CD8-positive, alpha-beta T cell (primary cell): ENCODE measurements at regions of chr14 and their contacts with region 1.

Region 1: GRCh38 chr14:31207755-31208545 is at the start of gene HECTD1:
- DNase-seq: peak; percentile 78 to 97 (median 86)
- ATAC-seq: peak; percentile 67
- H3K4me3 ChIP-seq: peak within 1 kb of the TSS; percentile 74 to 77
- H3K4me3 Mint-ChIP-seq: peak within 1 kb of the TSS; percentile 96
- H3K27ac ChIP-seq: peak within 1 kb of the TSS; percentile 94 to 95
- H3K27ac Mint-ChIP-seq: peak within 1 kb of the TSS; percentile 100
- H3K4me1 ChIP-seq: peaks cover 36% of the 10 kb centered on the region
- H3K4me1 Mint-ChIP-seq: peaks cover 57% of the 10 kb centered on the region
- H3K27me3 ChIP-seq: no peaks in the 10 kb centered on the region
- H3K27me3 Mint-ChIP-seq: no peaks in the 10 kb centered on the region
- CTCF ChIP-seq: peak; percentile 81
- total RNA-seq, gene HECTD1: 148 to 152 TPM

Region 2: GRCh38 chr14:30848449-30849240 is 359.3 kb before region 1 on chr14:
- CTCF ChIA-PET with region 1: no interaction called
- POLR2A ChIA-PET with region 1: no interaction called
- intact Hi-C with region 1: no loop called
- DNase-seq: no peak
- ATAC-seq: no peak
- H3K4me3 ChIP-seq: no peak overlapping the region
- H3K4me3 Mint-ChIP-seq: no peak overlapping the region
- H3K27ac ChIP-seq: no peak overlapping the region
- H3K27ac Mint-ChIP-seq: no peak overlapping the region
- H3K4me1 ChIP-seq: no peaks in the 10 kb centered on the region
- H3K4me1 Mint-ChIP-seq: no peaks in the 10 kb centered on the region
- H3K27me3 ChIP-seq: no peaks in the 10 kb centered on the region
- H3K27me3 Mint-ChIP-seq: peaks cover 30% of the 10 kb centered on the region
- CTCF ChIP-seq: no peak

Region 3: GRCh38 chr14:31127690-31128089 is 80.3 kb before region 1 on chr14:
- CTCF ChIA-PET with region 1: interaction called, 16 read pairs
- POLR2A ChIA-PET with region 1: interaction called, 16 read pairs
- intact Hi-C with region 1: loop called (anchors 1 to 2 kb)
- DNase-seq: peak in 6 of 9 experiments; percentile 4 to 93 (median 28)
- ATAC-seq: peak; percentile 85
- H3K4me3 ChIP-seq: no peak overlapping the region
- H3K4me3 Mint-ChIP-seq: no peak overlapping the region
- H3K27ac ChIP-seq: peak overlapping the region in 1 of 2 experiments; percentile 32
- H3K27ac Mint-ChIP-seq: peak overlapping the region; percentile 0
- H3K4me1 ChIP-seq: peaks cover 19% of the 10 kb centered on the region
- H3K4me1 Mint-ChIP-seq: peaks cover 42% of the 10 kb centered on the region
- H3K27me3 ChIP-seq: no peaks in the 10 kb centered on the region
- H3K27me3 Mint-ChIP-seq: no peaks in the 10 kb centered on the region
- CTCF ChIP-seq: no peak

Region 4: GRCh38 chr14:31194095-31194494 is 13.9 kb before region 1 on chr14:
- CTCF ChIA-PET with region 1: interaction called, 11 read pairs
- POLR2A ChIA-PET with region 1: interaction called, 6 read pairs
- intact Hi-C with region 1: no loop called
- DNase-seq: no peak
- ATAC-seq: no peak
- H3K4me3 ChIP-seq: no peak overlapping the region
- H3K4me3 Mint-ChIP-seq: no peak overlapping the region
- H3K27ac ChIP-seq: no peak overlapping the region
- H3K27ac Mint-ChIP-seq: no peak overlapping the region
- H3K4me1 ChIP-seq: peaks cover 21% of the 10 kb centered on the region
- H3K4me1 Mint-ChIP-seq: peaks cover 51% of the 10 kb centered on the region
- H3K27me3 ChIP-seq: no peaks in the 10 kb centered on the region
- H3K27me3 Mint-ChIP-seq: no peaks in the 10 kb centered on the region
- CTCF ChIP-seq: no peak

Region 5: DNA sequence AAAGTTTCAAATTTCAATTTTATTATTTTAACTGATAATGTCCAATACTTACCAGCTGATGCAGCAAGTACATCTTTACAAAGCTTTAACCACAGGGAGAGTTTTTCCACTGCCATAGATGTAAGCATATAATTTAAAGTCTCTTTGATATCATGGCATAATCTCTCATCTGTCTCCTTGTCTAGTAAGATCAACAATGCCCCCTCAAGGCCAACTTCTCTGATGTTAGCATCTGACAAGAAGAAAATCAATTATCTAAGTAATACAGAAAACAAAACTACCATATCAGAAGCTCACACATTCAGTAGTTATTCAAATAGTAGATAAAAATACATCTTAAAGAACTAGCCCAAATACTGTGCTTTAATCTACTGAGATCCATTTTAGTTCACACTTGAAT is 118.2 kb after region 1 on chr14:
- CTCF ChIA-PET with region 1: interaction called, 4 read pairs
- POLR2A ChIA-PET with region 1: interaction called, 7 read pairs
- intact Hi-C with region 1: loop called in 1 of 2 experiments (anchors 10 kb)
- DNase-seq: peak in 3 of 9 experiments; percentile 27 to 53 (median 38)
- ATAC-seq: peak; percentile 31
- H3K4me3 ChIP-seq: no peak overlapping the region
- H3K4me3 Mint-ChIP-seq: no peak overlapping the region
- H3K27ac ChIP-seq: no peak overlapping the region
- H3K27ac Mint-ChIP-seq: no peak overlapping the region
- H3K4me1 ChIP-seq: no peaks in the 10 kb centered on the region
- H3K4me1 Mint-ChIP-seq: peaks cover 2% of the 10 kb centered on the region
- H3K27me3 ChIP-seq: no peaks in the 10 kb centered on the region
- H3K27me3 Mint-ChIP-seq: no peaks in the 10 kb centered on the region
- CTCF ChIP-seq: no peak

Region 6: GRCh38 chr14:31420319-31421111 is 212.6 kb after region 1 on chr14 and contains the start of gene HEATR5A:
- CTCF ChIA-PET with region 1: no interaction called
- POLR2A ChIA-PET with region 1: interaction called, 14 read pairs
- intact Hi-C with region 1: loop called (anchors 1 to 2 kb)
- DNase-seq: peak; percentile 87 to 95 (median 93)
- ATAC-seq: peak; percentile 97
- H3K4me3 ChIP-seq: peak within 1 kb of the TSS; percentile 76 to 96
- H3K4me3 Mint-ChIP-seq: peak within 1 kb of the TSS; percentile 97
- H3K27ac ChIP-seq: peak within 1 kb of the TSS; percentile 63 to 71
- H3K27ac Mint-ChIP-seq: peak within 1 kb of the TSS; percentile 91
- H3K4me1 ChIP-seq: peaks cover 13% of the 10 kb centered on the region
- H3K4me1 Mint-ChIP-seq: peaks cover 25% of the 10 kb centered on the region
- H3K27me3 ChIP-seq: no peaks in the 10 kb centered on the region
- H3K27me3 Mint-ChIP-seq: no peaks in the 10 kb centered on the region
- CTCF ChIP-seq: no peak
- total RNA-seq, gene HEATR5A: 3.4 to 3.5 TPM

Region 7: GRCh38 chr14:31561155-31561846 is 353.4 kb after region 1 on chr14 and contains the start of gene NUBPL:
- CTCF ChIA-PET with region 1: no interaction called
- POLR2A ChIA-PET with region 1: no interaction called
- intact Hi-C with region 1: loop called (anchors 1 to 5 kb)
- DNase-seq: peak; percentile 95 to 99 (median 98)
- ATAC-seq: peak; percentile 95
- H3K4me3 ChIP-seq: peak within 1 kb of the TSS; percentile 75 to 86
- H3K4me3 Mint-ChIP-seq: peak within 1 kb of the TSS; percentile 96
- H3K27ac ChIP-seq: peak within 1 kb of the TSS; percentile 82 to 86
- H3K27ac Mint-ChIP-seq: peak within 1 kb of the TSS; percentile 98
- H3K4me1 ChIP-seq: peaks cover 18% of the 10 kb centered on the region
- H3K4me1 Mint-ChIP-seq: peaks cover 35% of the 10 kb centered on the region
- H3K27me3 ChIP-seq: no peaks in the 10 kb centered on the region
- H3K27me3 Mint-ChIP-seq: peaks cover 4% of the 10 kb centered on the region
- CTCF ChIP-seq: no peak
- total RNA-seq, gene NUBPL: 4.7 to 7.5 TPM

Region 8: DNA sequence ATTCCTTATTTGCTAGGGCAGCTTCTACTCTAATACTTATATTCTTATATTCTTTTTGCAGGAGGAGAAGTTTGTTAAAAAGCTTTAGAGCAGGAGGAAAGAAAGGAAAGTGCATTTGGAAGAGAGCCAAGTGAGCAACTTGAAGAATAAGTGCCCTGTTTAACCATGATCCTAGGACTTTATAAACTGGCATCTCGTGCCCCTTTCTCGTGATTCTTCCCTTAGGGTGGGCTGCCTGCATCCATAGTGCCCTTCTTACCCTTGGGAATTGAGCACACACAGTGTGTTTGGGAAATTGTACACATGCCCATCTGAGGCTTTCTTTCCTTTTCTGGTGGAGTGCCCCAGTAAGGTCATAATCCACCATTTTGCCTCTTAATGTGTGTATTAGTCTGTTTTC is 495.1 kb after region 1 on chr14:
- CTCF ChIA-PET with region 1: no interaction called
- POLR2A ChIA-PET with region 1: no interaction called
- intact Hi-C with region 1: no loop called
- DNase-seq: no peak
- ATAC-seq: no peak
- H3K4me3 ChIP-seq: no peak overlapping the region
- H3K4me3 Mint-ChIP-seq: no peak overlapping the region
- H3K27ac ChIP-seq: no peak overlapping the region
- H3K27ac Mint-ChIP-seq: no peak overlapping the region
- H3K4me1 ChIP-seq: no peaks in the 10 kb centered on the region
- H3K4me1 Mint-ChIP-seq: no peaks in the 10 kb centered on the region
- H3K27me3 ChIP-seq: no peaks in the 10 kb centered on the region
- H3K27me3 Mint-ChIP-seq: no peaks in the 10 kb centered on the region
- CTCF ChIP-seq: no peak